ENCODE measurements at regions of chr20 and their contacts with region 1.

Region 1: DNA sequence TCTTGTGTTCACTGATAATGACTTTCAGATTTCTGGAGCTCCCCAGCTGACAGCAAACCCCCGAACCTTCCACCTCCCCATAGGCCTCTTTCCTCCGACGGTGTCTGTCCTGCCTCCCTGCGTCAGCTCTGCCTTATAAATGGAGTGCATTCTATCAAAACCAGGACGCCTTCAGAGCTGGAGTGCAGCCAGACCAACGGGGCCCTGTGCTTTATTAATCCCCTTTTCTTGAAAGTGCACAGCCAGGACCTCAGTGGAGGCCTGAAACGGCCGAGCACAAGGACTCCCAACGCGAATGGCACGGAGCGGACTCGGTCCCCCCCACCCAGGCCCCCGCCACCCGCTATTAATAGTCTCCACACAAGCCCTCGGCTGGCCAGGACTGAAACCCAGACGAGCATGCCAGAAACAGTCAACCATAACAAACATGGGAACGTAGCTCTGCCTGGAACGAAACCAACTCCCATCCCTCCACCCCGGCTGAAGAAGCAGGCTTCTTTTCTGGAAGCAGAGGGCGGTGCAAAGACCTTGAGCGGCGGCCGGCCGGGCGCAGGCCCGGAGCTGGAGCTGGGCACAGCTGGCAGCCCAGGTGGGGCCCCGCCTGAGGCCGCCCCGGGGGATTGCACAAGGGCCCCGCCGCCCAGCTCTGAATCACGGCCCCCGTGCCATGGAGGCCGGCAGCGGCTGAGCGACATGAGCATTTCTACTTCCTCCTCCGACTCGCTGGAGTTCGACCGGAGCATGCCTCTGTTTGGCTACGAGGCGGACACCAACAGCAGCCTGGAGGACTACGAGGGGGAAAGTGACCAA is 42.3 kb upstream of the NAA20 start:
- DNase-seq: peak; percentile 68 to 94 (median 75)

Region 2: DNA sequence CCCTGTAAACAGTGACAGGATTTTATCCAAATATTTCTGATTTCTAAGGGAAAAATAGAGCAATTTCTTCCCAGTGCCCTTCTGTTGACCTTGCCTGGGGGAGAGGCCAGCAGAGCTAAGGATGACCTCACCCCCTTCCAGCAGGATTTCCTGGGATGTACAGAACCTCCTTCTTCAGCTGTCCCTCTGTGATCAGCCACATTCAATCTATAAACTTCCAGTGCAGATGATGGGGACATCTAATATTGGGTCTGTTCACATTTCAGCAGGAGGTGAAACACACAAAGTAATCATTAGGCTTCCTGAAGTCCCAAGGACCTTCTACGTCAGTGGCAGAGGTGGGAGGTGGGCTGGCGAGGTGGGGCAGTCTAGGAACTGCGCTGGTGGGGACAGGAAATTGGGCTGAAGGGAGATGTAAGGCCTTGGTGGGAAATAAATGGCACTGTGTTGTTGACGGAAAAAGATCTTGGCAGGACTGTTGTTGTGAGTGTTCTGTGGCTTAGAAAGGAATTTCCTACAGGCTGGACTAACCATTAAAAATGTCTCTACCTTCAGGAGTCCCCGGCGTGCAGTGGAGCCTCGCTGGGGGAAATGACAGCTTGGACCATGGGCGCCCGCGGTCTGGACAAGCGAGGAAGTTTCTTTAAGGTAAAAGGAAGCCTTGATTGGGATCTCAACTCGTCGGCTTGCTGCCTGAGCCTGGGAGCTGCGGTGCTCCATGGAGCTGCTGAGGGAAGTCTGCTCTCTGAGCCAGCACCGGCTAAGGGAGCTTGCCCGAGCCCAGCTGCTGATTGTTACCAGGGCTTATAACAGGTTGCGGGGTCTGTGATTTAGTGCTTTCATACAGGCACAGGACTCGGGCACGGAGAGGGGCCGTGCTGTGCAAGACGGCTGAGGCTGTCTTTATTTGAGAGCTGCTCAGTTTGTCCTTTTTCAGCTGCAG is 85.5 kb before region 1 on chr20:
- intact Hi-C with region 1: loop called (anchors 5 kb)
- DNase-seq: peak; percentile 21 to 93 (median 40)

Region 3: GRCh38 chr20:19944772-19945459 is 29.9 kb before region 1 on chr20:
- intact Hi-C with region 1: loop called (anchors 5 kb)
- DNase-seq: peak in 1 of 10 donors; percentile 12

Region 4: GRCh38 chr20:20463933-20464374 is 489.1 kb after region 1 on chr20:
- intact Hi-C with region 1: no loop called
- DNase-seq: peak in 9 of 10 donors; percentile 36 to 93 (median 64)

Region 5: DNA sequence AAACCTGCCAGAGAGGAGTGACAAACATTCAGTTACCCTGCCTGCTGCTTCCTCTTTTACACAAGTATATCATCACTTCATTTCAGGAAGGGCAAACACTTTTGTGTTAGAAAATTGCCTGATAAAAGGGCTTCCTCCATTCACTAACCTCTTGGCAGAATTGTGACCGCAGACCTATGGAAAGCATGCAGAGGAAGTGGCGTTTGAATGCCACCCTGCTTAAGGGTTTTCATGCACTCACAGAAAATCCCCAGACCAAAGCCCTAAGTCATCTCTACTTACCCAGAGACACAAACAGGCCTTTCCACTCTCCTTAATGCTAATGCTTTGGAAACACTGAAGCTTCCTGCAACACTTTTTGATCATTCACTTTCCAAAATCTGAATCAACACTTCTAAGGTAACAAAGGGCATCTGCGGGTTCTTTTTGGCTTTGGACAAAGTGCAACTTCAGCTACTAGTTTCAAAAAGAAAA is 759.7 kb after region 1 on chr20:
- intact Hi-C with region 1: no loop called
- DNase-seq: no peak